ENCODE measurements at regions of chr17 and their contacts with region 1.

Region 1: GRCh38 chr17:80082403-80083135 is 18.8 kb upstream of the GAA start:
- DNase-seq: peak; percentile 50 to 86
- H3K4me3 ChIP-seq: no peak overlapping the region
- H3K27ac ChIP-seq: no peak overlapping the region
- H3K4me1 ChIP-seq: peaks cover 0 to 8% (median 1%) of the 10 kb centered on the region in 4 experiments; a peak in 5 of 7 replicates
- H3K27me3 ChIP-seq: no peaks in the 10 kb centered on the region
- CTCF ChIP-seq: peak; percentile 58 to 83 (median 78)
- EP300 ChIP-seq: no peak
- POLR2A ChIP-seq: no peak
- RAD21 ChIP-seq: peak; percentile 76 to 84

Region 2: GRCh38 chr17:79290726-79291125 is 791.8 kb before region 1 on chr17:
- CTCF ChIA-PET with region 1: no interaction called
- POLR2A ChIA-PET with region 1: no interaction called
- DNase-seq: no peak
- H3K4me3 ChIP-seq: no peak overlapping the region
- H3K27ac ChIP-seq: no peak overlapping the region
- H3K4me1 ChIP-seq: 0 out of 7 replicates have a peak, but pooled peaks cover 0 to 3% (median 0%) of the 10 kb centered on the region in 4 experiments
- H3K27me3 ChIP-seq: peaks cover 0 to 11% (median 1%) of the 10 kb centered on the region in 4 experiments; a peak in 4 of 7 replicates
- CTCF ChIP-seq: no peak
- EP300 ChIP-seq: no peak
- POLR2A ChIP-seq: no peak
- RAD21 ChIP-seq: no peak

Region 3: DNA sequence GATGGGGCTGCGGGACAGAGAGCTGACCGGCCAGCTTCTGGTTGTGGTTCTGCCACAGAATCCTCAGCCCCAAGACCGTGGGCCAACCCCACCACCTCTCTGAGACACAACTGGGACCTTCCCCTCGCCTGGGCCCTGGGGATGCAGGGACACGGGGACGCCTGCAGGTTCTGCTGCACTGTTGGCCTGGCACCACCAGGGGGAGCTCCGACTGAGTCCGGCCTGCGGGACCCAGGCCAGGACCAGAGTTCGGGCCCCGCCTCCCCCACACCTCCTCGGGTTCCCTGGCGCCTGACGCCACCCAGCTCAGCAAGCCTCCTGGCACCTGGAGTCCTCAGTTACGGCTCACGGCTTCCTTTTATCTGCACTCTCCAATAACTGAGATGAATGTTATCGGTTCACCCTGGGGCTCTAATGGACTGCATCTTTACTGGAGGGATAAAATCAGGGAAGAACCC is 74.2 kb before region 1 on chr17:
- CTCF ChIA-PET with region 1: interaction called, 44 read pairs
- POLR2A ChIA-PET with region 1: no interaction called
- DNase-seq: peak; percentile 38 to 98
- H3K4me3 ChIP-seq: no peak overlapping the region
- H3K27ac ChIP-seq: no peak overlapping the region
- H3K4me1 ChIP-seq: peaks cover 0 to 8% (median 3%) of the 10 kb centered on the region in 4 experiments; a peak in 5 of 7 replicates
- H3K27me3 ChIP-seq: no peaks in the 10 kb centered on the region
- CTCF ChIP-seq: peak; percentile 92 to 98 (median 96)
- EP300 ChIP-seq: no peak
- POLR2A ChIP-seq: no peak
- RAD21 ChIP-seq: peak; percentile 65 to 76

Region 4: DNA sequence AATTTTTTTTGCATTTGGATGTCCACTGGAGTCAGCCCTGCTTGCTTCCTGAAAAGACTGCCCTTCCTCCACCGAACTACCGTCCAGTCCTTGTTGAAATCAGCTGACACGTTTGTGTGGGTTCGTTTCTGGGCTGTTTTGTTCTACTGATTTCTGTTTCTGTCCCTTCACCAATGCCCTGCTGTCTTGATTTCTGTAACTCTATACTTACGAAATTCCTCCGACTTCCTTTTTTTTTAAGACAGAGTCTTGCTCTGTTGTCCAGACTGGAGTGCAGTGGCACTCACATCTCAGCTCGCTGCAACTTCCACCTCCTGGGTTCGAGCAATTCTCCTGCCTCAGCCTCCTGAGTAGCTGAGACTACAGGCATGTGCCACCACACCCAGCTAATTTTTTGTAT is 10.4 kb after region 1 on chr17:
- CTCF ChIA-PET with region 1: interaction called, 33 read pairs
- POLR2A ChIA-PET with region 1: no interaction called
- DNase-seq: no peak
- H3K4me3 ChIP-seq: no peak overlapping the region
- H3K27ac ChIP-seq: no peak overlapping the region
- H3K4me1 ChIP-seq: no peaks in the 10 kb centered on the region; a peak in 1 of 7 replicates
- H3K27me3 ChIP-seq: no peaks in the 10 kb centered on the region
- CTCF ChIP-seq: no peak
- EP300 ChIP-seq: no peak
- POLR2A ChIP-seq: no peak
- RAD21 ChIP-seq: no peak

Region 5: DNA sequence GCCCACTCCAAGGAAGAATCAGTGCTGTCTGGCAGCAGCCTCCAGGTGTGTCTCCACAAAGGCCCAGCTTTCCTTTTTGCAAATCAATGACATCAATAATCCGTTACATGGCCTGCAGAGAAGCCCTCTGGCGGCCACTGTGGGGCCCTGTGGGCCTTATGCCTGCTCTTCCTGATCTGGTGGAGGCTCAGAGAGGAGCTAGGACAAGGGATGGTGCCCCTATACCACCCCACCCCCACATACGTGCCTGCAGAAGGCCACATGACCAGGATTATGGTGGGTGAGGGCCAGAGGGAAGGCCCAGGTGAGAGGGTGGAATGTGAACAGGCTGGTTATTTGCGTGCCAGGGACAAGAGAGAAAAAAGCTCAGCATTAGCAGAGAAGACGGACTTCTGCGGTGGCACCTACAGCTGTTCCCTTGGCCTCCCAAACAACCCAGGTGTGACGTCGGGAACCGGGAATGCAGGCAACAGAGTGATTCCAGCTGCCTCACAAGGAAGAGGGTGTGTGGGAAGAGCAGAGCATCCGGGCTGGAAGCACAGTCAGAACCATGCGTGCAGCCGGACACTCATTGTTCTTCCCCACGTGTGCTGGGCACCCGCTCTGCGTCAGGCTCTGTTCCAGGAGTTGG is 41.9 kb after region 1 on chr17:
- CTCF ChIA-PET with region 1: interaction called, 23 read pairs
- POLR2A ChIA-PET with region 1: interaction called, 8 read pairs
- DNase-seq: peak; percentile 51 to 71
- H3K4me3 ChIP-seq: peak overlapping the region in 3 of 4 experiments; percentile 29 to 35 (median 31); a peak in 5 of 8 replicates
- H3K27ac ChIP-seq: peak overlapping the region; percentile 68
- H3K4me1 ChIP-seq: peaks cover 3 to 18% (median 12%) of the 10 kb centered on the region in 4 experiments
- H3K27me3 ChIP-seq: no peaks in the 10 kb centered on the region
- CTCF ChIP-seq: peak; percentile 70 to 82 (median 82)
- EP300 ChIP-seq: 0 out of 3 replicates have a peak, but pooled peaks of 1 of the 2 experiments have one; percentile 15
- POLR2A ChIP-seq: peak in 1 of 2 experiments; percentile 65; a peak in 2 of 3 replicates
- RAD21 ChIP-seq: peak; percentile 58 to 70

Region 6: GRCh38 chr17:80187515-80187941 is 105.0 kb after region 1 on chr17:
- CTCF ChIA-PET with region 1: interaction called, 16 read pairs
- POLR2A ChIA-PET with region 1: interaction called, 3 read pairs
- DNase-seq: no peak
- H3K4me3 ChIP-seq: no peak overlapping the region
- H3K27ac ChIP-seq: no peak overlapping the region
- H3K4me1 ChIP-seq: no peaks in the 10 kb centered on the region
- H3K27me3 ChIP-seq: no peaks in the 10 kb centered on the region; a peak in 1 of 7 replicates
- CTCF ChIP-seq: no peak
- EP300 ChIP-seq: no peak
- POLR2A ChIP-seq: no peak
- RAD21 ChIP-seq: no peak